ENCODE measurements at regions of chr2 and their contacts with region 1.

Region 1: GRCh38 chr2:239824046-239824694 is 201.0 kb downstream of the NDUFA10 start:
- DNase-seq: peak; percentile 91
- ATAC-seq: peak; percentile 99
- H3K4me3 ChIP-seq: no peak overlapping the region
- H3K27ac ChIP-seq: no peak overlapping the region
- H3K4me1 ChIP-seq: no peaks in the 10 kb centered on the region
- H3K27me3 ChIP-seq: peaks cover 22% of the 10 kb centered on the region
- CTCF ChIP-seq: peak; percentile 73

Region 2: DNA sequence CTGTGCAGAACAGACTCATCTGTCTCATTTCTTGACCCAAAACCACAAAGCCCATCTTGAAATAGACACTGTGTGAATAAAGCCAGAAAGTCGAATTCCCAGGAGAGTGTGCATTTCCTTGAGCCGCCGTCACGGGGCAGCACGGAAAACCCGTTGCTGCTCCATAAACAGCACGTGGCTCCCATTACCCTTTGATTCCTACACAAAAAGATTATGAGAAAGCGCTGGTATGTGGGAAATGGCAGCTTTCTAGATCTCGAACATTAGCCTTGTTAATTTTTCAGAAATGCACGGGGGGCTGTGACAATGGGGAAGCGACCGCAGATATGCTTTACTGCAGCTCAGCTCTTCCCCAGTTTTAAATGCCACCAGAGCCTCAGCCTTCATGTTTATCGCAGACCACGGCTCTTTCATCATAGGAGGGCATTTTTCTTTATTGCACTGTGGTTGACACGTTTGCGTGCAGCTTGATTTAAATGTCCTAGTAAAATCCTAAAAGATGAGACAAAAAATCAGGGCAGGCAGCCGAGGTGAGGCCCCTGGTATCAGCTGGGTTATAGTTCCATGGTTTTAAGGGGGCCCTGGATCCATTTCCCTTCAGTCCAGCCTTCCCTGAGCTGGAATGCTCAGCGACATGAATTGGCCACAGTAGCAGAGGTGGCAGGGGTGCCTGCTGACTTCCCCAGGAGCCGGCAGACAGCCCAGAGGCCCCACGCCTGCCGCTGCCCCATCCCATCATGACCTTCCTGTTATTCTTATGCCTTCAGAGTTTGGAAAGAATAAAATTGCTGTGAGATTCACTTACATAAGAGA is 48.3 kb before region 1 on chr2:
- CTCF ChIA-PET with region 1: no interaction called
- POLR2A ChIA-PET with region 1: no interaction called
- intact Hi-C with region 1: no loop called
- DNase-seq: no peak
- ATAC-seq: no peak
- H3K4me3 ChIP-seq: no peak overlapping the region
- H3K27ac ChIP-seq: no peak overlapping the region
- H3K4me1 ChIP-seq: no peaks in the 10 kb centered on the region
- H3K27me3 ChIP-seq: peaks cover 84% of the 10 kb centered on the region
- CTCF ChIP-seq: no peak

Region 3: GRCh38 chr2:239882331-239882732 is 58.2 kb after region 1 on chr2:
- CTCF ChIA-PET with region 1: no interaction called
- POLR2A ChIA-PET with region 1: no interaction called
- intact Hi-C with region 1: loop called (anchors 1 kb)
- DNase-seq: peak; percentile 74
- ATAC-seq: peak; percentile 79
- H3K4me3 ChIP-seq: no peak overlapping the region
- H3K27ac ChIP-seq: no peak overlapping the region
- H3K4me1 ChIP-seq: no peaks in the 10 kb centered on the region
- H3K27me3 ChIP-seq: peaks cover 19% of the 10 kb centered on the region
- CTCF ChIP-seq: peak; percentile 75

Region 4: GRCh38 chr2:239991689-239992314 is 167.6 kb after region 1 on chr2:
- CTCF ChIA-PET with region 1: no interaction called
- POLR2A ChIA-PET with region 1: no interaction called
- intact Hi-C with region 1: loop called (anchors 1 kb)
- DNase-seq: peak; percentile 65
- ATAC-seq: peak; percentile 49
- H3K4me3 ChIP-seq: no peak overlapping the region
- H3K27ac ChIP-seq: no peak overlapping the region
- H3K4me1 ChIP-seq: no peaks in the 10 kb centered on the region
- H3K27me3 ChIP-seq: no peaks in the 10 kb centered on the region
- CTCF ChIP-seq: peak; percentile 88

Region 5: GRCh38 chr2:240143801-240144648 is 319.9 kb after region 1 on chr2:
- CTCF ChIA-PET with region 1: no interaction called
- POLR2A ChIA-PET with region 1: no interaction called
- intact Hi-C with region 1: loop called (anchors 5 kb)
- DNase-seq: peak; percentile 70
- ATAC-seq: peak; percentile 91
- H3K4me3 ChIP-seq: no peak overlapping the region
- H3K27ac ChIP-seq: no peak overlapping the region
- H3K4me1 ChIP-seq: no peaks in the 10 kb centered on the region; the same call in 1 of the 2 replicates
- H3K27me3 ChIP-seq: no peaks in the 10 kb centered on the region
- CTCF ChIP-seq: peak; percentile 87